ENCODE measurements at regions of chr17 and their contacts with region 1.

Region 1: GRCh38 chr17:32486111-32486700 is 587 bp upstream of the CDK5R1 start:
- DNase-seq: peak; percentile 70
- H3K4me3 Mint-ChIP-seq: peak overlapping the region; percentile 45
- H3K27ac Mint-ChIP-seq: no peak overlapping the region
- H3K4me1 Mint-ChIP-seq: peaks cover 47% of the 10 kb centered on the region
- H3K27me3 Mint-ChIP-seq: no peaks in the 10 kb centered on the region

Region 2: DNA sequence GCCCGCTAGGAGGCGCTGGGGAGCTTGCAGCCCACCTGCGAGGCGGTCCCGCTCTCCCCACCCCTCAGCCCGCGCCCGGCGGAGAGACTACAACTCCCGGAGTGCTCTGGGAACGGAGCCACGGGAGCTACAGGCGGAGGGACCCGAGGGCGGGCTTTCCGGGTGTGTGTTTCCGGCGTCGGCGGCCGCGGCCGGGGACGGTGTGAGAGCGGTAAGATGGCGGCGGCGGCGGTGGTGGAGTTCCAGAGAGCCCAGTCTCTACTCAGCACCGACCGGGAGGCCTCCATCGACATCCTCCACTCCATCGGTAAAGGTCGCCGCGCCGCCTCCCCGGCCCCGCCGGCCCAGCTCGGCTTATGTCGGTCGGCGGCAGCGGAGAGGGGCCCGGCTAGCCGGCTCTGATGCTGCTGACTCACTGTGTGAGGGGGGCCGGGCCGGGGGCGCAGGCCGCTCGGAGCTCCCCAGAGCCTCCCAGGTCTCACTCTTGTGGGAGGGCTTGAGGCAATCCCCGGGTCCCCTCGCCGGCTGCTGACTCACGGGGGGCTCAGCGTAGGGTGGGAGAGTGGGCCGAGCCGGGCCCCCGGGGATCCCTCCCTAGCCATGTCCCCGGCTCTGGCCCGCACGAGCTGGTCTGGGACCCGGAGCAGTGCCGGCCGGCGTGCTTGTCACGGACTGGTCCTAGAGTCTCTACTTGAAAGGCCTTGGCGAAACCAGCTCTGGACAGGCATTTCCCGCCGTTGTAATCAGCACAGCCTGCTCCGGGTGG is 41.7 kb before region 1 on chr17 and contains the start of gene PSMD11:
- CTCF ChIA-PET with region 1: interaction called, 15 read pairs
- intact Hi-C with region 1: loop called (anchors 2 kb)
- DNase-seq: peak; percentile 98
- H3K4me3 Mint-ChIP-seq: peak within 1 kb of the TSS; percentile 93
- H3K27ac Mint-ChIP-seq: peak within 1 kb of the TSS; percentile 89
- H3K4me1 Mint-ChIP-seq: peaks cover 25% of the 10 kb centered on the region
- H3K27me3 Mint-ChIP-seq: peaks cover 5% of the 10 kb centered on the region
- total RNA-seq, gene PSMD11: 132 to 145 TPM

Region 3: DNA sequence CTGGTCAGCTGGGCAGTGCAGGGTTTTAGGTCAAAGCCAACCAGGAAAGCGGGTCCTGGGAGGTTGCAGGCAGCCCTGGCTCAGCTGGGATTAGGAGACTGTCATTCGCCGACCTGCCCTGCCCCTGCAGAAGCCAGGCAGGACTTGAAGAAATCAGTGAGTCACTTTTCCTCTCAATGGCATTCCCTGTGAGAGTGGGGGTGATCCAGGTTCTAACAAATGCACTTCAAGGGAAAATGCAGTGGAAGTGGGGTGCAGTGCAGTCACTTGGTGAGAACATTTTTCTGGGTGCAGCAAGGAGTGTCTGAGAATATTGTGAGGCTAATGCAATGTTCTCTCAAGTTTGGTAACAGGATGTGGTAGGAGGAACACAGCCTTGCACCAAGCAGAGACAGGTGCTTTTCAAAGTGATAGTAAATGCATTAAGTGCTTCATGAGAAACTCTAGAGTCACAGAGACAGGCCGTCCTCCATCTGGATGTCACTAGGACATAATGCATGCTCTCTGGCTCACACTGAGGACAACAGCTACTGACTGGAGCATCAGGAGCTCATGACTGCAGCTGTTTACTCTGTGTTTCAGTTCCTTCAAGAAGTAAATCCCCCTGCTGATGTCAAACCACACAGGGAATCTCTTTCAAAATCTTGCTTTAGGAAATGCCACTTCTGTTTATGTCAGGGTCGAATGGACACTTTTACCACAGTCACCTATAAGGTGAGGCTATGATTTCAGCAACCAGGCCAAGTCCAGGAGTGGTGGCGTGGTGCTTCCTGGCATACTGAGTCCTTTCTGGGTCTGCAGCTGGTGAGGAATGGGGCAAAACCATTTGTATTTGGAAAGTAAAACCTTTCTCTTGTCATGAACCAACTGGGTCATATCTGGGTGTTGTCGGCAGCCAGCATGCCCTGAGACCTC is 17.3 kb after region 1 on chr17:
- CTCF ChIA-PET with region 1: interaction called, 4 read pairs
- intact Hi-C with region 1: loop called (anchors 1 kb)
- DNase-seq: peak; percentile 83
- H3K4me3 Mint-ChIP-seq: peak overlapping the region; percentile 47
- H3K27ac Mint-ChIP-seq: peak overlapping the region; percentile 97
- H3K4me1 Mint-ChIP-seq: peaks cover 76% of the 10 kb centered on the region
- H3K27me3 Mint-ChIP-seq: no peaks in the 10 kb centered on the region

Region 4: GRCh38 chr17:32659419-32659842 is 173.2 kb after region 1 on chr17:
- CTCF ChIA-PET with region 1: interaction called, 9 read pairs
- intact Hi-C with region 1: loop called (anchors 2 kb)
- DNase-seq: peak; percentile 86
- H3K4me3 Mint-ChIP-seq: no peak overlapping the region
- H3K27ac Mint-ChIP-seq: no peak overlapping the region
- H3K4me1 Mint-ChIP-seq: no peaks in the 10 kb centered on the region
- H3K27me3 Mint-ChIP-seq: no peaks in the 10 kb centered on the region

Region 5: GRCh38 chr17:32671896-32672295 is 185.7 kb after region 1 on chr17:
- CTCF ChIA-PET with region 1: no interaction called
- intact Hi-C with region 1: no loop called
- DNase-seq: no peak
- H3K4me3 Mint-ChIP-seq: no peak overlapping the region
- H3K27ac Mint-ChIP-seq: no peak overlapping the region
- H3K4me1 Mint-ChIP-seq: no peaks in the 10 kb centered on the region
- H3K27me3 Mint-ChIP-seq: no peaks in the 10 kb centered on the region

Region 6: GRCh38 chr17:32769839-32770238 is 283.6 kb after region 1 on chr17:
- CTCF ChIA-PET with region 1: no interaction called
- intact Hi-C with region 1: loop called (anchors 5 kb)
- DNase-seq: no peak
- H3K4me3 Mint-ChIP-seq: no peak overlapping the region
- H3K27ac Mint-ChIP-seq: no peak overlapping the region
- H3K4me1 Mint-ChIP-seq: no peaks in the 10 kb centered on the region
- H3K27me3 Mint-ChIP-seq: no peaks in the 10 kb centered on the region

Measured in activated naive CD4-positive, alpha-beta T cell treated with anti-CD3 and anti-CD28 coated beads for 36 hours (primary cell).